Activated T-helper 1 cell treated with anti-CD3 and anti-CD28 coated beads, Interleukin-12 subunit alpha, Interleukin-12 subunit beta, Interleukin-2, Interleukin-4 antibody, amounts not matched to agents 30 ng/mL and 10 ng/mL and 1 ng/mL, durations not matched to agents 14 hours and 24 hours and 36 hours (primary cell): ENCODE measurements at regions of chr9 and their contacts with region 1.

Region 1: GRCh38 chr9:77475641-77476473 is 172.3 kb downstream of the GNA14 start:
- DNase-seq: peak; percentile 54
- H3K4me3 Mint-ChIP-seq: peak overlapping the region; percentile 37
- H3K27ac Mint-ChIP-seq: peak overlapping the region; percentile 86
- H3K4me1 Mint-ChIP-seq: peaks cover 38% of the 10 kb centered on the region
- H3K27me3 Mint-ChIP-seq: no peaks in the 10 kb centered on the region

Region 2: DNA sequence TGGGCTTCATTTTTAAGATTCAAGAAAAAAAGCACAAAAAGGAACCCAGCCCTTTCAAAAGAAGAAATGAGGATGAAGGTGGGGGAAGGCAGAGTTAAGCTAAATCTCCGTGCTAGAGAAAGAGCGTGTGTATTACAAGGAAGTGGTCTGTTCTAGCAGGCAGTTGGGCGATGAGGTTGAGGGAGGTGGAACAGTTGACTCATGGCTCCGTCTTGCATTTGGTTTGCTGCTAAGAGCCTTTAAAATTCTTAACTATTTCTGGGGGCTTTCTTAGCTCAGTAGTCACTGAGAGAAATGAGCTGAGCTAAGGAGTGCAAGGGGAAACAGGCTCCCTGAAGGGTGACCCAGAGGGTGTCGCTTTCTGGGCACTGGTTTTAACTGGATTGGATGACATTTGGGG is 899.5 kb before region 1 on chr9:
- intact Hi-C with region 1: loop called (anchors 2 kb)
- DNase-seq: peak; percentile 59
- H3K4me3 Mint-ChIP-seq: peak overlapping the region; percentile 25
- H3K27ac Mint-ChIP-seq: peak overlapping the region; percentile 89
- H3K4me1 Mint-ChIP-seq: peaks cover 34% of the 10 kb centered on the region
- H3K27me3 Mint-ChIP-seq: peaks cover 1% of the 10 kb centered on the region

Region 3: GRCh38 chr9:77456829-77457437 is 18.9 kb before region 1 on chr9:
- intact Hi-C with region 1: loop called (anchors 1 kb)
- DNase-seq: peak; percentile 71
- H3K4me3 Mint-ChIP-seq: no peak overlapping the region
- H3K27ac Mint-ChIP-seq: no peak overlapping the region
- H3K4me1 Mint-ChIP-seq: peaks cover 25% of the 10 kb centered on the region
- H3K27me3 Mint-ChIP-seq: peaks cover 4% of the 10 kb centered on the region

Region 4: DNA sequence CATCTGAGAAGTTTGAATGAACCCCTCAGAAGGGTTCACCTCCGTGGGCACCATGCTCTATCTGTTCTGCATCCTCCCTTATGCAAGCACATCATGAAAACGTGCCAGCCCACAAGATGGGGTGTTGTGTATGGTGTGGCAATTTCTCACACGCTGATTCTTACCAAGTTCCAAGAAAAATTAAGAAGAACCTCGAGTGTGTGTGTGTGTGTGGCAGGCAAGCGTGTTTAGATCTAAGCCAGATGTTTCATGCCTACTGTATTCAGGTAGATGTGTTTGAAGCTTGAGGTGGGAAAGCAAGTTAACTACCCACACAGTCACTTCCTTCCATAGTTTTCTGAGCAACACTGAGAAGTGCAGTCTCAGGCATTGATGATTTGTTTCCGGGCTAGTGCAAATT is 250.0 kb after region 1 on chr9:
- intact Hi-C with region 1: loop called (anchors 1 kb)
- DNase-seq: peak; percentile 8
- H3K4me3 Mint-ChIP-seq: peak overlapping the region; percentile 37
- H3K27ac Mint-ChIP-seq: peak overlapping the region; percentile 92
- H3K4me1 Mint-ChIP-seq: peaks cover 41% of the 10 kb centered on the region
- H3K27me3 Mint-ChIP-seq: no peaks in the 10 kb centered on the region

Region 5: DNA sequence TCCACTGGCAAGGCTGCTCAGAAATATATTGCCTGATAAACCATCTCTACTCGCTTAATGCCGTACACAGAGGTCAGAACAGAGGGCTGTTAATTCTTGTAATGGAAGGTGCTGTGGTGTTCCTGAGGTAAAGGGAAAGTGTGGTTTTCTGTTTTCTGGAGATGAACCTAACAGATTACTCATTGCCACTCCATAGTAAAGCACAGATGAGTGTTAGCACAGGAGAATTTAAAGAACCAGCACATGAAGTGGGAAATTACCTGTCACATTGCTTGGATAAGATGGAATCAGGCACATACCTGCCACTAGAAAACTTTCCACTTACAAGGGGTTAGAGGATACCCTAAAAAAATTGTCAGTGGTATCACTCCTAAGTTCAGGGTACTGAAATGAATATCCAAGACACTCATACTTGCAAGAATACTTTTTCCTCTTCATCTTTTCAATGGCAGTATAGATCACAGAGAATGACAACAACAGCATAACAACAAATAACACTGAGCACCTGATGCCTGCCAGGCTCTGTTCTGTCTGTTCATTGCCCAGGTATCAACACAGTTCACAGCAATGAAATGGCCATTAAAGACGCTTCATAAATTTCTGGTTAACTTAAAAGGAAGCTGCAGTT is 325.2 kb after region 1 on chr9:
- intact Hi-C with region 1: loop called (anchors 1 kb)
- DNase-seq: no peak
- H3K4me3 Mint-ChIP-seq: no peak overlapping the region
- H3K27ac Mint-ChIP-seq: peak overlapping the region; percentile 82
- H3K4me1 Mint-ChIP-seq: peaks cover 26% of the 10 kb centered on the region
- H3K27me3 Mint-ChIP-seq: no peaks in the 10 kb centered on the region

Region 6: GRCh38 chr9:77977210-77977611 is 501.4 kb after region 1 on chr9:
- intact Hi-C with region 1: loop called (anchors 1 kb)
- DNase-seq: peak; percentile 34
- H3K4me3 Mint-ChIP-seq: peak overlapping the region; percentile 40
- H3K27ac Mint-ChIP-seq: peak overlapping the region; percentile 81
- H3K4me1 Mint-ChIP-seq: peaks cover 51% of the 10 kb centered on the region
- H3K27me3 Mint-ChIP-seq: no peaks in the 10 kb centered on the region